CD8-positive, alpha-beta T cell (primary cell): ENCODE measurements at regions of chr11 and their contacts with region 1.

Region 1: DNA sequence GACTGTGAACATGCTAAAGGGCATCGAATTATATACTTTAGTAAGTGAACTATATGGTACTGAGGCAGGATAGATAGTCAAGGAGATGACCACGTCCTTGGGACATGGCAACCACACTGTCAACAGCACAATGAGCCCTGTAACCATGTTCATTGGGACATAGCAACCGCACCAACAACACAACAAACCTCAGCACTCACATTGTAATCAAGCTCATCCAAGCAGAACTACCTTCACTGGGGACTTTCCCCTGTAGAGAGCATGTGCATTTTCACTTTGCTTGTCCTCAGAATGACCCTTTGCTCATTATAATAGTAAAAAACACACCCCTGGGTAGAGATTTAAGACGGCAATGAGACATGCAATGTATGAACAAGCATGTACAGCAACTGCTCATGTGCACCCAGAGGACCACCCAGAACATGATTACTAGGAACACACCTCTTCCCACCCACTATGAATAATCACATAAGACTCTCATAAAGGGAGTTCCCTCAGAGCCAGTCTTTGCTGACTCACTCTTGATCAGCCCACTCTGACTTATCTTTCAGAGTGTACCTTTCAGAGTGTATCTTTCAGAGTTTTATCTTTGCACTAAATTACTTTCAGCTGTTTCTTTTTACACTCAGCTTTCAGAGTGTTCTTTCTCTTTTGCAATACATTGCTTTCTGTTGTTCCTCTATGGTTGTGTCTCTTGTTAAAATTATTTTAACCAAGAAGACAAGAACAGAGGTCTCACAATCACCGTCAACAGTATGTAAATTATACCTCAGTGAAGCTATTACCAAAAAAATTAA is 4.1 kb upstream of the PLAAT2 start:
- DNase-seq: peak in 8 of 9 experiments; percentile 41 to 95 (median 62)
- ATAC-seq: peak; percentile 88
- H3K4me3 ChIP-seq: no peak overlapping the region
- H3K4me3 Mint-ChIP-seq: peak overlapping the region; percentile 13
- H3K27ac ChIP-seq: peak overlapping the region; percentile 50 to 90
- H3K27ac Mint-ChIP-seq: peak overlapping the region; percentile 90
- H3K4me1 ChIP-seq: peaks cover 33% of the 10 kb centered on the region
- H3K4me1 Mint-ChIP-seq: peaks cover 44% of the 10 kb centered on the region
- H3K27me3 ChIP-seq: no peaks in the 10 kb centered on the region
- H3K27me3 Mint-ChIP-seq: no peaks in the 10 kb centered on the region
- CTCF ChIP-seq: no peak

Region 2: DNA sequence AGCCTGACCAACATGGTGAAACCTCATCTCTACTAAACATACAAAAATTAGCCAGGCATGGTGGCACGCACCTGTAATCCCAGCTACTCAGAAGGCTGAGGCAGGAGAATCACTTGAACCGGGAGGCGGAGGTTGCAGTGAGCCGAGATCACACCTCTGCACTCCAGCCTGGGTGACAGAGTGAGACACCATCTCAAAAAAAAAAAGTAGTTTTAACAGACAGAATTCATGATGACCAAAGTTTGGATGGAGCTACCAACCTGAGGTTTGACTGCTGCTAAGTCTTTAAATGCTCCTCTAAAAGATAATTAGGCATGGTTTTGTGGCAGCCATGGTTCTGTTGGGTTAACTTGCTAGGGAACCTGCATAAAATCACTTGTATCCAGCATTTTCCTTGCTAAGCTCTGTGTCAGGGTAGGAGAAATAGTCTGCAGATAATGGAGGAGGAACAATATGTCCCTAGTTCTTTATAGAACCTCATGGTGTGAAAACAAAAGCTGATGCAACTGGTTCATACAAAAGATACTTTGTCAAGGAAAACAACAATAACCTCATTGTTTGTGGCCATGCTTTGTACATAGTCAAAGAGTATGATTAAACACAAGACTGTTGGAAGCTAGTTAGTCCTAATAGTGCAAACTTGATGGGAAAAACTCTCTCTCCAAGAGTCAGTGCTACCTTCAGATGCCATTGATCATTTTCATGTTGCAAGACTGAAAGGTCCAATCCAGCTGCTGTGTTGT is 15.9 kb after region 1 on chr11:
- CTCF ChIA-PET with region 1: no interaction called
- POLR2A ChIA-PET with region 1: no interaction called
- intact Hi-C with region 1: no loop called
- DNase-seq: peak in 1 of 9 experiments; percentile 22
- ATAC-seq: no peak
- H3K4me3 ChIP-seq: no peak overlapping the region
- H3K4me3 Mint-ChIP-seq: peak overlapping the region; percentile 23
- H3K27ac ChIP-seq: peak overlapping the region in 1 of 2 experiments; percentile 74
- H3K27ac Mint-ChIP-seq: peak overlapping the region; percentile 38
- H3K4me1 ChIP-seq: peaks cover 14% of the 10 kb centered on the region
- H3K4me1 Mint-ChIP-seq: peaks cover 15% of the 10 kb centered on the region
- H3K27me3 ChIP-seq: no peaks in the 10 kb centered on the region
- H3K27me3 Mint-ChIP-seq: no peaks in the 10 kb centered on the region
- CTCF ChIP-seq: no peak

Region 3: DNA sequence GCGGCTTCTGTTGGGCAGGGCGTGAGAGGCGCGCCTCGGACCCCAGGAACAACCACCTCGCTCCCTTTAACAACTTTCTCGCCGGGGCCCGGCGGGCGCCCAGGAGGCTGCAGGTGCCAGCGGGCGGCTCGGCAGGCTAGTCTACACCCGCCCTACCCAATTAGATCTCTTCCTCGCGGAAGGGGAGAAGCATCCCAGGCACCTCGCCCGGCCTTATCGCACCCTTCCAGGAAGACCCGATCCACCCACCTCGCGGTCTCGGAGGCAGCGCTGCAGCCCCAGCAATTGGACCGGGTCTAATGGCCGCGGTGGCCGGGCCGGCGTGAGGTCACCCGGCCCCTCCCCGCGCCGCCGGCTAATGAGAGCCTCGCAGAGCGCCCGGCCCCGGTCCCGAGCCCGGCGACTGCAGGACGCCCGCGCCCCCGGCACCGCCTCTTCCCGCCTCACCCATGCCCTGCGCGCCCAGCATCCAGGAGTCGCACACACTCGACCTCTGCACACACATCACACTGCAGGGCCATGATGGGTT is 47.0 kb after region 1 on chr11 and contains the start of gene PLAAT3:
- CTCF ChIA-PET with region 1: interaction called, 3 read pairs
- POLR2A ChIA-PET with region 1: no interaction called
- intact Hi-C with region 1: loop called in 1 of 2 experiments (anchors 5 kb)
- DNase-seq: peak in 8 of 9 experiments; percentile 14 to 64 (median 32)
- ATAC-seq: peak; percentile 64
- H3K4me3 ChIP-seq: peak within 1 kb of the TSS; percentile 87 to 93
- H3K4me3 Mint-ChIP-seq: peak within 1 kb of the TSS; percentile 88
- H3K27ac ChIP-seq: peak within 1 kb of the TSS; percentile 61 to 66
- H3K27ac Mint-ChIP-seq: peak within 1 kb of the TSS; percentile 82
- H3K4me1 ChIP-seq: no peaks in the 10 kb centered on the region
- H3K4me1 Mint-ChIP-seq: peaks cover 21% of the 10 kb centered on the region
- H3K27me3 ChIP-seq: no peaks in the 10 kb centered on the region
- H3K27me3 Mint-ChIP-seq: no peaks in the 10 kb centered on the region
- CTCF ChIP-seq: no peak
- total RNA-seq, gene PLAAT3: 5.0 to 5.9 TPM

Region 4: DNA sequence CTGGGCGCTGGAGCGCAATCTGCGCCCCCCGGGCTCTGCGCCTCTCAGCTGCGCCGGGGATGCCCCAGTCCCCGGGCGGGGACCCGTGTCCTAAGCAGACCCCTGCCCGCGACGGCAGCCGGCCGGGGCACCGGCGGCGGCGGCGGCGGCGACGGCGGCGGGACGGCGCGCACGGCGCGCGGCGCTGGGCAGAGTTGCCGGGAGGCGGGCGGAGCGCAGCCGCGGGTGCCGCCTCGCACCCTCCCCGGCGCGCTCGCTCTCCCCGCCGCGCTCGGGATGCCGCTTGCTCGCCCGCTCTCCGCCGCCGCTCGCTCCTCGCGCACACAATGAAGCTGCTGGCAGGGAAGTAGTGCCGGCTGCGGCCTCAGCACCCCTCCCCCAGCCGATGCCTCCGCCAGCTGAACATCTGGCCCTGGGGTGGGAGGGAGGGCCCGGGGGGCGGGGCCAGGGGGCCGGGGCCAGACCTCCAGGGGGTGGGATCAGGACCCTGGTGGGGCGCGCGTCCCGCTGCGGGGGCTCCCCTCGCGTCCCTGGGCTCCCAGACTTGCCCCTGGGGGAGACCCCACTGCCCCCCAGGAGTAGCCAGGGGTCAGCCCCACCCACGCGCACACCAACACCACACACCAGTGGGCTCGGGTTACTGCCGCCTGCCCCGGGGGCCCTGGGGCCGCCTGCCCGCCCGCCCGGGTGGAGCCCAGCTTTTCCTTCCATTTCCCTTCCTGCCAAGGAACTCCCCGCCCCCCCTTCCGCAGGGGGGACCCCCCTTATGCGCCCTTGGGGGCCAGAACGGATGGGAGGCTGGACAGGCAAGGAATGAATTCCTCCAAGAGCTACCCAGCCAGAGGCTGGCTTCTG is 349.8 kb after region 1 on chr11 and contains the start of gene RCOR2:
- CTCF ChIA-PET with region 1: no interaction called
- POLR2A ChIA-PET with region 1: no interaction called
- intact Hi-C with region 1: no loop called
- DNase-seq: peak in 8 of 9 experiments; percentile 32 to 78 (median 58)
- ATAC-seq: peak; percentile 65
- H3K4me3 ChIP-seq: peak within 1 kb of the TSS; percentile 47 to 48
- H3K4me3 Mint-ChIP-seq: peak within 1 kb of the TSS; percentile 85
- H3K27ac ChIP-seq: no peak within 1 kb of the TSS
- H3K27ac Mint-ChIP-seq: no peak within 1 kb of the TSS
- H3K4me1 ChIP-seq: peaks cover 28% of the 10 kb centered on the region
- H3K4me1 Mint-ChIP-seq: peaks cover 15% of the 10 kb centered on the region
- H3K27me3 ChIP-seq: no peaks in the 10 kb centered on the region
- H3K27me3 Mint-ChIP-seq: no peaks in the 10 kb centered on the region
- CTCF ChIP-seq: no peak
- total RNA-seq, gene RCOR2: not detected